BJ (cell line): ENCODE measurements at regions of chr6 and their contacts with region 1.

Region 1: DNA sequence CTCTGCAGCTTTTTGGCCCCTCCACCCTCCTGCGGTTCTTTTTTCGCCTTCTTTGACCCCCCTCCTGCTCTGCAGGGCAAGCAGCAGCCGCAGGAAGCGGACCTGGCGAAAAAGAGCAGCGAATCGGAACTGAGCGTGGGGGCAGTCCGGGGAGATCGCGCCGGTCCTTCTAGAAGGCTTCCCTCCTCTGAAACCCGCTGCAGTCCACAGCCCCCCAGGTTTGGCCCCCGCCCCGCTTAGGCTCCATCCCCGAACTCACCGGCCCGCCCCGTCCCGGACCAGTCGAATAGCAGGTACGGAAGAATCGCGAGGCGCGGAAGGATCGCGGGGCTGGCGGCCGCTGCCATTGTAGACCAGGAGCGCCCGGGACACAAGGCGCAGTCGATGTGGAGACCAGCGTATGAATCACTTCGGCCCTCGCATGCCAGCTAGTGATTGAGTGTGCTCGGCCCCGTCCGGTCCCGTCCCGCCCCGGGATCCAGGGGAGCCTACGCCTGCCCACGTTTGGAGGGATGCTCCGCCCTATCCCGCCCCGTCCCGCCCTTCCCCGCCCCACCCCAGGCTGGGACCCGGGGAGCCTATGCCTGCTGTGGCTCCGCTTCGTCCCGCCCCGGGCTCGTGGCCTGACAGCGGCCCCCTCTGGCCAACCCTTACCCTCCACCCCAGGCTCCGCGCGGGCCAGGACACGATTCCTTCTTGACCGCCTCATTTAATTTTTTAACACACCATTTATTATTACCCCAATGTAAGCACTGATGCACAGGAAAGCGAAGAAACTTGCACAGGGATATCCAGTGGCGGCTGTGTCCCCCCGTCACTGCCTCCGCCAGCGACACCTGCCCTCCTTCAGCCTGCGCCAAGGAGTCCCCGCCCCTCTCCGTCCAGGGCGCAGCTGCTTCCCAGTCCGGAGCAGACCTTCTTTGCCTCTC is at the start of gene ULBP3:
- DNase-seq: peak; percentile 71
- H3K4me3 ChIP-seq: peak within 1 kb of the TSS; percentile 55
- H3K27me3 ChIP-seq: no peaks in the 10 kb centered on the region
- CTCF ChIP-seq: peak; percentile 78
- polyA plus RNA-seq, gene ULBP3: 5.6 and 6.0 TPM in 2 replicates

Region 2: DNA sequence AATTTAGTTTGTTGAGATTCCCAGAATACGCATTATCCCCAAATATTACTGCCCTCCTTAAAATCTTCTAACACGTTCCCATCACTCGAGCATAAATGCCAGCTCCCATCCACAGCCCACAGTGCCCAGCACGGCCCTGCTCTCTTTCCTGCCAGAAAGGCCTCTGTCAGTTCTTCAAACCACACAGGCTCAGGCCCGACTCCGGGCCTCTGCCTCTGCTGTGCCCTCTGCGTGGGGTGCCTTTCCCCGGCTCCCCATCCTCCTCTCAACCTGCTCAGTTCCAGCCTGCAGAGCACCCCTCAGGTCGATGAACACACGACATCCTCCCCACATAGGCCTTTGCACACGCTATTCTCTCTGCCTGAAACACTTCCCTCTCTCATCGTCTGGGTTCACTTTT is 12.8 kb before region 1 on chr6:
- CTCF ChIA-PET with region 1: interaction called, 29 read pairs
- POLR2A ChIA-PET with region 1: no interaction called
- DNase-seq: no peak
- H3K4me3 ChIP-seq: no peak overlapping the region
- H3K27me3 ChIP-seq: peaks cover 13% of the 10 kb centered on the region
- CTCF ChIP-seq: no peak